Right ventricle myocardium inferior (tissue), 1 donor: ENCODE measurements at regions of chr6 and their contacts with region 1.

Region 1: GRCh38 chr6:68975064-68975463 is 340.0 kb downstream of the ADGRB3 start:
- DNase-seq: no peak
- ATAC-seq: peak; percentile 67

Region 2: DNA sequence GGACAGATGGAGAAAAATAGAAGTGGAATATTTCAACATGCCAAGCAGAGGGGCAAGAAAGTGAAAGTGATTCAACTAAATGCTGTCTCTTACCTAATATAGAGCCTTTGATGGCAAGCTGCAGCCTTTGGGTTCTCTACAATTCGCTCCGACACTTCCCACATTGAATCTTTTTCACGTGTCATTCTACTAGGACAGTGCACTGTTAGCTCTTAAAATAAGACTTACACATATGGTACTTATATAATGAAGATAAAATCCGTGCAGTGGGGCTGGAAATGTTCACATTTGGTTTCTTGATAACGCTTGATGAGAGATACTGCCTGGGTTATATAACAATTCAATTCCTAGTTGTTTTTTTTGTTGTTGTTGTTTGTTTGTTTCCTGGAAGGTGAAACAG is 319.3 kb after region 1 on chr6:
- intact Hi-C with region 1: loop called (anchors 10 kb)
- DNase-seq: no peak
- ATAC-seq: no peak

Region 3: DNA sequence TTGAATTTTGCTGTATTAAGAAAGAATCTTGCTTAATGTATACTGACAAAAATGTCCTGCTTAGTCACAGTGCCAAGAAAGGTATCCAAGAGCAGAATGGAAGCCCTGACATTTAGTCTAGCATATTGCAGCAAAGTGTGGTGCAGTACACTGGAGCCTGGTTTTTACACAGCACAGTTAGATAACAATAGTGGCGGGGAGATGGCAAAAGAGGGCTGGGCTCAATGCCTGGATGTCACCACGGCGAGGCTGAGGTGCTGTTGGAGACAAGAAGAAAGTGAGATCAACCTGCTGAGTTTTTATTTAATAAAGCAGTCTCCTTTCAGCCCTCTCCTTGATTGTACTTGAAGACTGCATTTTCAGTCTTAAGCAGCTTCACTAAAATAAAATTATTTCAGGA is 395.7 kb after region 1 on chr6:
- intact Hi-C with region 1: loop called (anchors 10 kb)
- DNase-seq: no peak
- ATAC-seq: peak; percentile 82